K562 (cell line): ENCODE measurements at regions of chr1 and their contacts with region 1.

Region 1: DNA sequence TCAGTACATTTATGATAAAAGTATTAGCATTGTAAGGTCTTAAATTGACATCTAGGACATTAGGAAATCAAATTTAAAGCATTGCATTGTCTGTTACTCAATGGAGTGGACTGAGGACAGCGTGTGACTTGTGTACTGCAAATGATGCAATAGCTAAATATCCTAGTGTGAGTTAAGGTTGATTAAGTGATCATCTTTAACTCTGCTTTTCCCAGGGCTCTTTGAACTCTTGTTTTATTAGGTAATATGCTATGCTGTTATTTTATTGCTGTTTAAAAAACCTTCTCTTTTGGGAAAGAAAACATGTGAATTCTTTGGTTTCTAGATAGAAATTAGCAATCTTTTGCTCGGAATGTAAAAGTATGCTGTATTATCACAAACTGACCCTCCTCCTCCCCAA is 38.6 kb downstream of the NFIA start:
- DNase-seq: peak in 1 of 4 experiments; percentile 49
- ATAC-seq: peak; percentile 74
- H3K4me3 ChIP-seq: no peak overlapping the region
- H3K27ac ChIP-seq: peak overlapping the region; percentile 82
- H3K4me1 ChIP-seq: peaks cover 0 to 36% of the 10 kb centered on the region in 2 experiments
- H3K27me3 ChIP-seq: no peaks in the 10 kb centered on the region
- CTCF ChIP-seq: no peak
- EP300 ChIP-seq: peak; percentile 59; the same call in 1 of the 2 replicates
- POLR2A ChIP-seq: 0 out of 2 replicates have a peak, but pooled peaks have one; percentile 23
- RAD21 ChIP-seq: no peak; a peak in 1 of 4 replicates

Region 2: GRCh38 chr1:61056573-61057439 is 64.2 kb before region 1 on chr1:
- CTCF ChIA-PET with region 1: no interaction called
- POLR2A ChIA-PET with region 1: no interaction called
- in situ Hi-C with region 1: no loop called
- intact Hi-C with region 1: loop called (anchors 2 kb)
- DNase-seq: peak; percentile 30 to 76 (median 56)
- ATAC-seq: peak; percentile 44
- H3K4me3 ChIP-seq: peak overlapping the region; percentile 57
- H3K27ac ChIP-seq: peak overlapping the region; percentile 85
- H3K4me1 ChIP-seq: peaks cover 35 to 36% of the 10 kb centered on the region in 2 experiments
- H3K27me3 ChIP-seq: no peaks in the 10 kb centered on the region
- CTCF ChIP-seq: no peak
- EP300 ChIP-seq: no peak
- POLR2A ChIP-seq: peak; percentile 39
- RAD21 ChIP-seq: no peak; a peak in 1 of 4 replicates

Region 3: DNA sequence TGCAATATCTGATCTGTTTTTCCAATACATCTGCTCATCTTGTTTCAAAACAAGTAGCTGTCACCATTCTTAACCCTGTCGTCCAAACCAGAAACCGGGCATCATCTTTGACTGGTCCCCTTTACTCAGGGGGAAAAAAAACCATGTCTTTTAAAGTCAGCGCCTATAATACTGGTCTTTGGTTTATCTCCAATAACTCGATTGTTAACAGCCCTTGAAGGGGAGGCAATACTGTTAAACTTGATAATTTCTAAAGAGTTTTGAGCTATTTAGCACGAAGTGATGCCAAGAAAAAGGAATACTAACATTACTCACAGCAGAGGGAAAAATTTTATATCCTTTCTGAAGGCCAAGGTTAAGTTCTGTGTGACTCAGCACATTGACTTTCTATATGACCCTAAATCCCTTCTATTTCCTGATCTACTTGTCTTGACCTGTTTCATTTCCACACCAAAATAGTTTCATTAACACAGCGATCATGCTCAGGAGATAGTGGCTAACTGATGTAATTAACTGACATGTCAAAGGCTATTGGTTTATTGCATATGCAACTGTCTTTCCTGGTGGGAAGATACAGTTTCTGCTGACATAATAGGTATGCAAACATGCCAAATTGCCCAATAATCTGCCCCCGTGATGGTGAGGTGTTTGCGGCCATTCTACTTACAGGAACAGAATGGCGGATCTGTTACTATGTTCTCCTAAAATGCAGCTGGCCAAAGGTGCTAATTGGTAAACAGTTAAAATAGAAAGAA is 20.5 kb after region 1 on chr1:
- CTCF ChIA-PET with region 1: no interaction called
- POLR2A ChIA-PET with region 1: interaction called, 10 read pairs
- in situ Hi-C with region 1: no loop called
- intact Hi-C with region 1: no loop called
- DNase-seq: peak in 2 of 4 experiments; percentile 25 to 47
- ATAC-seq: peak; percentile 56
- H3K4me3 ChIP-seq: no peak overlapping the region
- H3K27ac ChIP-seq: peak overlapping the region; percentile 51
- H3K4me1 ChIP-seq: peaks cover 8 to 33% of the 10 kb centered on the region in 2 experiments
- H3K27me3 ChIP-seq: no peaks in the 10 kb centered on the region
- CTCF ChIP-seq: no peak
- EP300 ChIP-seq: peak; percentile 94
- POLR2A ChIP-seq: no peak
- RAD21 ChIP-seq: 0 out of 4 replicates have a peak, but pooled peaks of 1 of the 2 experiments have one; percentile 6